ENCODE measurements at regions of chr6 and their contacts with region 1.

Region 1: DNA sequence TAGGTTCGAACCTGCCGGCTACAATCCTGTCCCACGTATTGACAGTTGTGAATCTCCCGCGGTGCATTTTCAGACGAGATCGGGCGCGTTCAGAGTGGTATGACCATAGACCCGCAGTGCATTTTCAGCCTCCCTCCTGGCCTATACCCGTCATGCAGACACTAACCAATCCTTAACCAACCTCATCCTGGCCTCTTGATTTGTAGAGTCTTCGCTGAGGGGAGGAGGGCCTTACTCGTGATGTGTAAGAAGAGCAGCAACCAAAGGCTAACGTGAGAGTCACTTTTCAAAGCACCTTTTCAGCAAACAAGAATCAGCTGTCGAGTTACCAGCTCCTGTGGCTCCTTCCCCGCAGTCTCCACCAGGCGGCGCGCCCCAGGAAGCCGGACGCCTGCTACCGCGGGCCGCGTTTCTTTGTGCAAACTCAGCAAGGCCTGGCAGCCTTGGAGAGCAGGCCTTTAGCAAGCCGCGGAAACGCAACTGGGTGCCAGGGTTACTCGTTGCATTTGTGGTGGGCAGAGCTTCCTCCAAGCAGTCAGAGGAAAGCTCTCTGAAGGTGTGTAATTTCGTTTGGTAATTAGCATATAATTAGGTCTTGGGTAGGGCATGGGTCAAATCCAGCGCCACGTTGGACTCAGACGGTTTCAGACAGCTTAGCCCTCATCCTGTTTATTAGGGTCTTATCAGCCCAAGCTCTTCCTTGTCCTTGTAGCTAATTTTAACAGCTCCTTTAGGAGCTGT is 139.8 kb downstream of the OR2B2 start:
- DNase-seq: peak; percentile 66
- H3K4me3 ChIP-seq: peak overlapping the region; percentile 31; the same call in 1 of the 2 replicates
- H3K27ac ChIP-seq: no peak overlapping the region
- H3K27me3 ChIP-seq: peaks cover 16% of the 10 kb centered on the region
- CTCF ChIP-seq: peak; percentile 99

Region 2: GRCh38 chr6:27518881-27519795 is 253.3 kb before region 1 on chr6:
- CTCF ChIA-PET with region 1: interaction called, 11 read pairs
- POLR2A ChIA-PET with region 1: no interaction called
- DNase-seq: peak; percentile 79
- H3K4me3 ChIP-seq: peak overlapping the region; percentile 93
- H3K27ac ChIP-seq: peak overlapping the region; percentile 77
- H3K27me3 ChIP-seq: peaks cover 11% of the 10 kb centered on the region
- CTCF ChIP-seq: peak; percentile 79

Region 3: GRCh38 chr6:27761391-27761790 is 11.0 kb before region 1 on chr6:
- CTCF ChIA-PET with region 1: interaction called, 38 read pairs
- POLR2A ChIA-PET with region 1: no interaction called
- DNase-seq: no peak
- H3K4me3 ChIP-seq: no peak overlapping the region
- H3K27ac ChIP-seq: no peak overlapping the region
- H3K27me3 ChIP-seq: peaks cover 8% of the 10 kb centered on the region
- CTCF ChIP-seq: no peak

Region 4: GRCh38 chr6:27785294-27785693 is 12.9 kb after region 1 on chr6:
- CTCF ChIA-PET with region 1: interaction called, 31 read pairs
- POLR2A ChIA-PET with region 1: no interaction called
- DNase-seq: no peak
- H3K4me3 ChIP-seq: no peak overlapping the region
- H3K27ac ChIP-seq: no peak overlapping the region
- H3K27me3 ChIP-seq: peaks cover 2% of the 10 kb centered on the region
- CTCF ChIP-seq: no peak

Region 5: DNA sequence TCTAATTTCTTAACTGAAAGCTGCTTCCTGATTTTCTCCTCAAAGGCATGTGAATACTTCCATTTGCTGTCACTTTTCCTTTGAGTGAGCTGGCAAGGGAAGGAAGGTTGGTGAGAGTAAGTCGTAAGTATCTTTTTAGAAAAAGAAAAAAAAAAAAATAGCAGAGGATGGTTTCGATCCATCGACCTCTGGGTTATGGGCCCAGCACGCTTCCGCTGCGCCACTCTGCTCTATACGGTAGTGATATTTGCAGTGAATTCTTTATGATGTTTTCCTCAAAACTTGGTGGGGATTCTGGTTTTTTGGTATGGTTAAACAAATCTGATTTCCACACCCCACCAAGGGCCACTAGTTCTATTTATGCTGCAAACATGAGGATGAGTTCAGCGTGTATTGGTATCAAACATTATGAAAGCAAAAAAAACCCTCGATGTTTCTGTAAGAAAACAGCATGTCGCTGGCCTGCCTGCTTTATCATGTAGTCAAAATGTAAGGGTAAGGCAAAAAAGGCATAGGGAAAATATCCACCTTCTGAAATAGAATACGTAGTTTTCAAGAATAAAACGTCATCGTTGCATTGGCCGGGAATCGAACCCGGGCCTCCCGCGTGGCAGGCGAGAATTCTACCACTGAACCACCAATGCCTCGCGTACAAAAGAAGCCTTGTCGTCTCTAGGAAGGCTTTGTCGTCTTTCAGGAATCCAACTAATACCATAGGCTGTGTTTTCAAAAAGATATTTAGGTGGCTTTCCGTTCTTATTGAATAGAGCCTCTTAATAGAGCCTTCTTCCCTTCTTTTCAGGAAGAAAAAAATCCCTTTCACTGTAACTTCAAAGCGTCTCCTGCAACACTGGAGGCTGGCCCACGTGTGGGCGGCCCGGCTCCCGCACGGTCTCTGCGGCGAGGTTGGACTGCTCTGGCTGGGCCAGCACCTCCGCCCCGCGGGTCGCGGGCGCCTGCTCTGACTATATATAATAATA is 130.2 kb after region 1 on chr6:
- CTCF ChIA-PET with region 1: interaction called, 87 read pairs
- POLR2A ChIA-PET with region 1: no interaction called
- DNase-seq: peak; percentile 55
- H3K4me3 ChIP-seq: peak overlapping the region; percentile 68
- H3K27ac ChIP-seq: peak overlapping the region; percentile 74
- H3K27me3 ChIP-seq: no peaks in the 10 kb centered on the region
- CTCF ChIP-seq: no peak

Measured in AG04450 (cell line).